Activated CD4-positive, alpha-beta T cell treated with anti-CD3 and anti-CD28 coated beads for 36 hours (primary cell): ENCODE measurements at regions of chr10 and their contacts with region 1.

Region 1: DNA sequence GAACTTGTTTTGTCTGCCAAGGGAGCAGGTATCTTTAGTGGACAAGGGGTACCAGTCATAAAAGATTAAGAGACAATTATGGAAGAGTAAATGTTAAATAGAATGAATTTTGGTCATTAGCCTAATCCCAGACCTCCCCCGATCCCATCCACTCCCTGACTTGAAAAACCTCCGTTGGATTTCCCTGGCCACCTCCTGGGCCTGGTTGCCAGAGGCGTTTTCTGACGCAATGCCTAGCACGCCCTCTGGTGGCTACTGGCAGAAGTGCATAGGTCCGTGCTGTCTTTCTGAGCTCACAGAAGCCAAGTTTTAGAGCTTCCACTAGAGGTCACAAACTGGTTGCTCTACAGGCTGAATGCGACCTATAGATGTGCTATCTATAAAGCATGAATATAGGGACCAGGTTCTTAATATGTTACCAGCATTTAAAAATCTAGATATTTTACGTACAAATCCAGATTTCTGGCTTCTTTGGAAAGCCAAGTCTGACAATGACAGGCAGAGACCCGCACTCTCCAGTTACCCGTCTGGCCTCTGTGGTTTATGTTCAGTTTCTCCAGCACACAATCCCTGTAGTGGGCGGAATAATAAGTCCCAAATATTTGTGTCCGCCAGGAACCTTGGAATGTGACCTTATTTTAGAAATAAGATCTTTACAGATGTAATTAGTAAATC is 39.8 kb downstream of the SPOCK2 start:
- DNase-seq: peak; percentile 96
- ATAC-seq: peak; percentile 97
- H3K4me3 Mint-ChIP-seq: no peak overlapping the region
- H3K27ac Mint-ChIP-seq: peak overlapping the region; percentile 28
- H3K4me1 Mint-ChIP-seq: peaks cover 14% of the 10 kb centered on the region
- H3K27me3 Mint-ChIP-seq: no peaks in the 10 kb centered on the region

Region 2: GRCh38 chr10:70874045-70874444 is 1174.5 kb before region 1 on chr10:
- CTCF ChIA-PET with region 1: no interaction called
- POLR2A ChIA-PET with region 1: no interaction called
- intact Hi-C with region 1: no loop called
- DNase-seq: no peak
- ATAC-seq: no peak
- H3K4me3 Mint-ChIP-seq: no peak overlapping the region
- H3K27ac Mint-ChIP-seq: no peak overlapping the region
- H3K4me1 Mint-ChIP-seq: peaks cover 3% of the 10 kb centered on the region
- H3K27me3 Mint-ChIP-seq: no peaks in the 10 kb centered on the region

Region 3: DNA sequence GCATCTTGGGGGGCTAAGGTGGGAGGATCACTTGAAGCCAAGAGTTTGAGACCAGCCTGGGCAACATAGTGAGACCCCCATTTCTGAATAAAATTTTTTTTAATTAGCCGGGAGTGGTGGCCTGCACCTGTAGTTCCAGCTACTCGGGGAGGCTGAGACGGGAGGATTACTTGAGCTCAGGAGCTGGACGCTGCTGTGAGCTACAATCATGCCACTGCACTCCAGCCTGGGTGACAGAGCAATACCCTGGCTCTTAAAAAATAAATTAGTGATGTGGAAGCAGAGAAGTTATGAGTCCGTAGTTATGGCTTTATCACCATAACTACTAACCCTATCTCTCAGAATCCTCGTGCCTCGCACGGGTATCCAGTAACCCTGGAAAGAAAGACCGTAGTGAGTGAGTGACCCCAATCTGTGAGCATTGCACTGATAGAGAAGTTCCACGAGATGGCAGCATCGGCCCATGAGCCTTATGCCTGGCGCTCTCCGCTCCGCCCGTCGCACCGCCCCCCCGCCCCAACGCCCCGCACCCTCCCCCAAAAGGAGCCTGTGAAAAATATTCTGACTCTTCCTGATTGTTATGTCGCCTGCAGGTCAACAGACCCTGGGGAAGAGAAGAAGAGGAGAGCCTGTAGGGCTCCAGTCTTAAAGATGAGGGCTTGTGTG is 734.4 kb before region 1 on chr10:
- CTCF ChIA-PET with region 1: no interaction called
- POLR2A ChIA-PET with region 1: no interaction called
- intact Hi-C with region 1: loop called in 1 of 2 experiments (anchors 5 kb)
- DNase-seq: peak; percentile 71
- ATAC-seq: peak; percentile 24
- H3K4me3 Mint-ChIP-seq: no peak overlapping the region
- H3K27ac Mint-ChIP-seq: no peak overlapping the region
- H3K4me1 Mint-ChIP-seq: peaks cover 18% of the 10 kb centered on the region
- H3K27me3 Mint-ChIP-seq: peaks cover 7% of the 10 kb centered on the region

Region 4: GRCh38 chr10:71957546-71958275 is 90.9 kb before region 1 on chr10:
- CTCF ChIA-PET with region 1: interaction called, 15 read pairs
- POLR2A ChIA-PET with region 1: no interaction called
- intact Hi-C with region 1: loop called (anchors 1 to 2 kb)
- DNase-seq: no peak
- ATAC-seq: no peak
- H3K4me3 Mint-ChIP-seq: no peak overlapping the region
- H3K27ac Mint-ChIP-seq: no peak overlapping the region
- H3K4me1 Mint-ChIP-seq: peaks cover 4% of the 10 kb centered on the region
- H3K27me3 Mint-ChIP-seq: peaks cover 13% of the 10 kb centered on the region

Region 5: DNA sequence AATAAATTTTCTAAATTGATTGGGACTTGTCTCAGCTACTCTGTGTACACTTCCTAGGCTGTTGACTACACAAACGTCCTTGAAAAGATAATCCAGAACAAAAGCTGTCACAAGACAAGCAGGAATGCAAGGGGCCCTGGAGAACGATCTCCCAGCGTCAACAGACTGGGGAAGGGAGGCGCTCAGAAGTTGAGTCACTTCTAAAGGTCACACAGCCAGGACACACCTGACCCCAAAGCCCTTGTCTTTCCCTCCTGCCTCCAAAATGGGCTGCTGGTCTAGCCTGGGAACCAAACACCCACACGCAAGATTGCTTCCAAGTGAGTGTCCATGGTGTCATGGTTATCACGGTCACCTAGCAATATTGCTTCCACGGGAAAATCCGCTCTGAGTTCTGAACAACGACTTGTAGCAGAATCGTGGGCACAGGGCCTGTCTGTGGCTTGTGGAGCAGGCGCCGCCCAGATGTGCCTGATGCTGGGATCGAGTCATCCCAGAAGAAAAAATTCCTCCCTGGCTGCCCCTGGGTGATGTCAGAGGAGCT is 10.1 kb before region 1 on chr10:
- CTCF ChIA-PET with region 1: interaction called, 16 read pairs
- POLR2A ChIA-PET with region 1: no interaction called
- intact Hi-C with region 1: no loop called
- DNase-seq: no peak
- ATAC-seq: no peak
- H3K4me3 Mint-ChIP-seq: no peak overlapping the region
- H3K27ac Mint-ChIP-seq: no peak overlapping the region
- H3K4me1 Mint-ChIP-seq: no peaks in the 10 kb centered on the region
- H3K27me3 Mint-ChIP-seq: no peaks in the 10 kb centered on the region

Region 6: GRCh38 chr10:72079356-72079755 is 30.8 kb after region 1 on chr10:
- CTCF ChIA-PET with region 1: interaction called, 10 read pairs
- POLR2A ChIA-PET with region 1: interaction called, 4 read pairs
- intact Hi-C with region 1: no loop called
- DNase-seq: peak; percentile 62
- ATAC-seq: peak; percentile 11
- H3K4me3 Mint-ChIP-seq: peak overlapping the region; percentile 38
- H3K27ac Mint-ChIP-seq: peak overlapping the region; percentile 84
- H3K4me1 Mint-ChIP-seq: peaks cover 93% of the 10 kb centered on the region
- H3K27me3 Mint-ChIP-seq: no peaks in the 10 kb centered on the region

Region 7: GRCh38 chr10:72229261-72230251 is 181.0 kb after region 1 on chr10:
- CTCF ChIA-PET with region 1: interaction called, 15 read pairs
- POLR2A ChIA-PET with region 1: interaction called, 3 read pairs
- intact Hi-C with region 1: no loop called
- DNase-seq: no peak
- ATAC-seq: no peak
- H3K4me3 Mint-ChIP-seq: no peak overlapping the region
- H3K27ac Mint-ChIP-seq: peak overlapping the region; percentile 75
- H3K4me1 Mint-ChIP-seq: peaks cover 38% of the 10 kb centered on the region
- H3K27me3 Mint-ChIP-seq: no peaks in the 10 kb centered on the region